ENCODE measurements at regions of chr15 and their contacts with region 1.

Region 1: DNA sequence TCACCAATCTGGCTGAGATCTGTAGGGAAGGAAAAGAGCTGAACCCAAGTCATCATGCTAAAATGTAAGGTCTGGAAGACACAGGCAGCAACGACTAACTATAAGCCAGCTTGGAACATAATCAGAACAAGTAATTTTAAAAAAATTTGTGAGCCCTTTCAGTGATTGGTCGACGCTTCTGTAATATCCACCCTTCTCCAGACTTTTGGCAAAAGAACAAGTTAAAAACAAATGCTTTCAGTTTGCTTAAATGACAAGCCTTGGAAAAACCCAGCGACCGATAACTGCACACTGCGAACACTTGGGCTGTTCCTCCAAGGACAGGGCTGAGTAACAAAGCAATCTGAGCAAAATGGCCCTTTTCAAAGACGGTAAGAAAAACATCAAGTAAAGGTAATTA is 49.6 kb downstream of the PCSK6 start:
- DNase-seq: no peak
- ATAC-seq: no peak
- H3K4me3 ChIP-seq: peak overlapping the region in 1 of 4 donors; percentile 25
- H3K27ac ChIP-seq: peak overlapping the region; percentile 11 to 65 (median 50)
- H3K4me1 ChIP-seq: peaks cover 11 to 14% of the 10 kb centered on the region in 2 donors
- H3K27me3 ChIP-seq: no peaks in the 10 kb centered on the region
- CTCF ChIP-seq: no peak
- POLR2A ChIP-seq: no peak

Region 2: GRCh38 chr15:101031213-101031612 is 408.7 kb before region 1 on chr15:
- in situ Hi-C with region 1: no loop called
- intact Hi-C with region 1: no loop called
- DNase-seq: no peak
- ATAC-seq: no peak
- H3K4me3 ChIP-seq: no peak overlapping the region
- H3K27ac ChIP-seq: no peak overlapping the region
- H3K4me1 ChIP-seq: no peaks in the 10 kb centered on the region
- H3K27me3 ChIP-seq: no peaks in the 10 kb centered on the region
- CTCF ChIP-seq: no peak
- POLR2A ChIP-seq: no peak

Region 3: DNA sequence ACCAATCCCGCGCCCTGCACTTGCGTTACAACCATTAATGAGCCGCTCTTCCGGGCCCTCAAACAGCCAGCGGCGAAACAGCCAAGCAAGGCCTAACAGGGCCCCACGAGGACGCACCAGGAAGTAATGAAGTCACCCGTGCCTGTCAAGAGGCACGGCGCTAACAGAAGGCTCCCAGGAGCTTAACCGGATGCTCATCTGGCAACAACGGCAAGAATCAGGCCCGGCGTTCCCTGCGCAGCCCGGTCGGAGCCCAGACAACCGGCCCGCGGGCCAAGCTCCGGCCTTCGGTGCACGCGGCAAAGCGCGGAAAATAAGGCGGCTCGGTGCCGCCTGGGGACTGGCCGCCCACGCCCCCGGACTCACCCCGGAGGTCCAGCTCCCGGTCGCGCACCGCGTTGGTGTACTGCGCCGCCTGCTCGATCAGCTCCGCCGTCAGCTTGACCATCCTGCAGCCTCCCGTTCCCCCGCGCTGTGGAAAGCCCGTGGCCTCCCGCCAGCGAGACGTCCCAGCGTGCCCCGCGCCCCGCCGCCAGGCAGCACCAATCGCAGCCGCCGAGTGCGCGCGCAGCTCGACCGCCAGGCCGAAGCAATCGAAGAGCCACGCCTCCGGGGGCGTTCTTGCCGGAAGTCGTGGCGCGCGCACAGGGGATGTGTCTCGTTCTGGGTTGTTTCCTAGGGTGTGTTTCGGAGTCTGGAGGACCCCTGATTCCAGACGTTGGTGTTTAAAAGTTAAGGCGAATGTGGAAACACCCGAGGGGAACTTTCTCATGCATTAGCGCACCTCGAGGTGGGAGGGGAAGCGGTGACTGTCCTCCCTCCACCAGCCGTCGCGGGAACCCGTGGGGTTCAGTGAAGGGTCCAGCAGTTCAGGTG is 145.0 kb before region 1 on chr15 and contains the start of gene SNRPA1:
- in situ Hi-C with region 1: no loop called
- intact Hi-C with region 1: loop called (anchors 5 kb)
- DNase-seq: peak; percentile 96 to 97
- ATAC-seq: peak; percentile 90 to 93
- H3K4me3 ChIP-seq: peak within 1 kb of the TSS; percentile 71 to 99 (median 92)
- H3K27ac ChIP-seq: peak within 1 kb of the TSS; percentile 93 to 99 (median 98)
- H3K4me1 ChIP-seq: peaks cover 30 to 37% of the 10 kb centered on the region in 2 donors
- H3K27me3 ChIP-seq: no peaks in the 10 kb centered on the region
- CTCF ChIP-seq: peak in 2 of 5 experiments; percentile 5 to 22
- POLR2A ChIP-seq: peak; percentile 82 to 92
- total RNA-seq, gene SNRPA1: 19.6 to 59.1 (median 26.2) TPM

Region 4: GRCh38 chr15:101795455-101795854 is 355.5 kb after region 1 on chr15:
- in situ Hi-C with region 1: no loop called
- intact Hi-C with region 1: no loop called
- DNase-seq: no peak
- ATAC-seq: no peak
- H3K4me3 ChIP-seq: no peak overlapping the region
- H3K27ac ChIP-seq: no peak overlapping the region
- H3K4me1 ChIP-seq: no peaks in the 10 kb centered on the region
- H3K27me3 ChIP-seq: no peaks in the 10 kb centered on the region
- CTCF ChIP-seq: no peak
- POLR2A ChIP-seq: no peak